Breast epithelium (tissue), 4 donors: ENCODE measurements at regions of chr4 and their contacts with region 1.

Region 1: GRCh38 chr4:10380735-10381134 is 76.5 kb downstream of the ZNF518B start:
- DNase-seq: no peak
- H3K4me3 ChIP-seq: no peak overlapping the region
- H3K27ac ChIP-seq: no peak overlapping the region
- H3K4me1 ChIP-seq: no peaks in the 10 kb centered on the region
- H3K27me3 ChIP-seq: no peaks in the 10 kb centered on the region
- CTCF ChIP-seq: no peak
- POLR2A ChIP-seq: no peak

Region 2: DNA sequence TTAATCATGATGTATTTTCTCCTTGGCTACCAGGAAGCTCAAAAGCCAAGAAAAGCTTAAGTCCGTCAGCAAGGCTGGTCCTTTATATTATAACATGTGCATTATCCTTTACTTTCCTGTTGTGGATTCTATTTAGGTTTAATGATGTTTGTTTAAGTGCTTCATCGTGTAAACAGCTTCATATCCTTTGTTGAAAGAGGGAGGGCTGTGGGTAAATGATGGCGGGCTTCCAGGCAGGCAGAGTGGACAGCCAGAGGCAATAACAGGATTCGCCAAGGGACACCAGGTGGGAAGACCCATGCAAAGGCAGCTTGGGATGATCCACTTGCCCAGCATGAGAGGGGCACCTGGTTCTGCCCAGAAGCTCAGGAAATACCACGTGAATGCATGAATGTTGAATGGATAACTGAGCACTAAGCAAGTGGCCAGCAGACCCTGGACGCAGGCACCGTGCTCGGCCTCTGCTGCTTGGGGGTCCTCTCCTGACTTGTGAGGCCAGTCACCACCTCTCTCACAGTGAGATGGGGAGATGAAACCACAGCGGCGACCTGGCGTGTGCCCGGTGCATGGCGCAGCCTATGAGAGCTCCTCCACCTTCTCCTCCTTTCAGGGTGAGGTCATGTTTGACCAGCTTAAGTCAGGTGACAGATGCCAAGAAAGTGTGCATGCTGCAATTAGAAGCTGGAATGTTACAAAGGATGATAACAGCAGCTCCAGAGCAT is 1584.8 kb before region 1 on chr4:
- intact Hi-C with region 1: no loop called
- DNase-seq: no peak
- H3K4me3 ChIP-seq: no peak overlapping the region
- H3K27ac ChIP-seq: no peak overlapping the region
- H3K4me1 ChIP-seq: no peaks in the 10 kb centered on the region
- H3K27me3 ChIP-seq: peaks cover 0 to 7% of the 10 kb centered on the region in 2 donors
- CTCF ChIP-seq: no peak
- POLR2A ChIP-seq: no peak

Region 3: DNA sequence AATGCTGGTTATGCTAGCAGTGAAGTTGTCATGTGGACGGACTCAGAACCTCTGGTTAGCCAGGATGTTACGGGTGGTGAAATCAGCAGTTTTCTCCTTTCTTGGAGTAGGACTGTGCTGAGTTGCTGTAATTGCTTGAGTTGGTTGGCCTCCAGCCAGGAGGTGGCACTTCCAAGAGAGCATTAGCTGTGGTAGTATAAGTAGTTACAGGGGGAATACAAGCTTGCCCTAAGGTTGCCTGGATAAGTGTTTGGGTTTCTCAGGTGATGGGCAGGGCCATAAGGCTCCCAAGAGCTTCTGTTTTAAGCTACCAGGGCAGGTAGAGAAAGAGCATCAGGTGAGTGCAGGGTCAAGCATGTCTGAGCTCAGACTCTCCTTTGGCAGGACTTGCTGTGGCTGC is 26.5 kb before region 1 on chr4:
- intact Hi-C with region 1: no loop called
- DNase-seq: no peak
- H3K4me3 ChIP-seq: no peak overlapping the region
- H3K27ac ChIP-seq: no peak overlapping the region
- H3K4me1 ChIP-seq: no peaks in the 10 kb centered on the region
- H3K27me3 ChIP-seq: no peaks in the 10 kb centered on the region
- CTCF ChIP-seq: no peak
- POLR2A ChIP-seq: no peak

Region 4: DNA sequence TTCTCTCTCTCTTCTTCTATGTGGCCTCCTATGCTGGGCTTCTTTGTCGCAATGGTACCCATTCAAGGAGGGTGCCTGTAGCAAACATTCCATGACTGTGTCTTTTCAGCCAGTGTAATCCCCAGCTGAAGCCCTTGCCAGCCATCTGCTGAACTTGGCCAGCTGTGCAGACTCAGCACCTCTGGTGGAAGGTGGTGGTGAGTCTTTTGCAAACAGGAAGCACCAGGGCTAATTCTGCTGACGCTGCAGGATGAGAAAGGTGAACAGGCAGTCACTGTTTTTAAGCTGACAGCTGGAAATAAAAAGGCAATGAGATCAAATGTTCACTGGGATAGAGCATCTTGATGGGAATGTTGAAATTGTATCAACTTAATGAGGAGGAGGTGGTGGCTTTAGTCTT is 602.5 kb after region 1 on chr4:
- intact Hi-C with region 1: loop called (anchors 5 kb)
- DNase-seq: no peak
- H3K4me3 ChIP-seq: no peak overlapping the region
- H3K27ac ChIP-seq: no peak overlapping the region
- H3K4me1 ChIP-seq: no peaks in the 10 kb centered on the region
- H3K27me3 ChIP-seq: no peaks in the 10 kb centered on the region
- CTCF ChIP-seq: no peak
- POLR2A ChIP-seq: no peak